ENCODE measurements at regions of chr6 and their contacts with region 1.

Region 1: GRCh38 chr6:121430514-121431460 is 4.7 kb upstream of the GJA1 start:
- DNase-seq: no peak
- H3K4me3 ChIP-seq: no peak overlapping the region
- H3K27ac ChIP-seq: peak overlapping the region in 1 of 2 donors; percentile 13
- H3K4me1 ChIP-seq: no peaks in the 10 kb centered on the region
- H3K27me3 ChIP-seq: no peaks in the 10 kb centered on the region
- CTCF ChIP-seq: peak; percentile 16 to 87 (median 69)
- POLR2A ChIP-seq: no peak

Region 2: DNA sequence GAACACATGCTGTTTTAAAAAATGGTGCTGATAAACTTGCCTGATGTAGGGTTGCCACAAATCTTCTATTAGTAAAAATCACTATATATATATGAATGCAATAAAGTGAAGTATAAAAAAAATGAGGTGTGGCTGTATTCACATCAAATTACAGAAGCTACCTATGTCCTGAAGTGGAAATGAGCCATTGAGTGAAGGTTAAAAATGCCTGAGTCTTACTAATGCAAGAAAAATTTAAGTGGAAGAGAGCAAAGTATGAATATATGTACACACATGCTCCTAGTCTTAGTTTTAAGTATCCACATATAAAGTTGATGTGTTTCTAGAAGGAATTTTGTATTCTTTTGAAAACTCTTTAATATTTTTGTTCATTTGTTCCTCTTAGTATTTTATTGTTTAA is 1272.9 kb before region 1 on chr6:
- intact Hi-C with region 1: no loop called
- DNase-seq: no peak
- H3K4me3 ChIP-seq: no peak overlapping the region
- H3K27ac ChIP-seq: no peak overlapping the region
- H3K4me1 ChIP-seq: no peaks in the 10 kb centered on the region
- H3K27me3 ChIP-seq: no peaks in the 10 kb centered on the region
- CTCF ChIP-seq: no peak
- POLR2A ChIP-seq: no peak

Region 3: GRCh38 chr6:121247386-121247785 is 183.4 kb before region 1 on chr6:
- intact Hi-C with region 1: no loop called
- DNase-seq: no peak
- H3K4me3 ChIP-seq: no peak overlapping the region
- H3K27ac ChIP-seq: no peak overlapping the region
- H3K4me1 ChIP-seq: no peaks in the 10 kb centered on the region
- H3K27me3 ChIP-seq: no peaks in the 10 kb centered on the region
- CTCF ChIP-seq: no peak
- POLR2A ChIP-seq: no peak

Region 4: DNA sequence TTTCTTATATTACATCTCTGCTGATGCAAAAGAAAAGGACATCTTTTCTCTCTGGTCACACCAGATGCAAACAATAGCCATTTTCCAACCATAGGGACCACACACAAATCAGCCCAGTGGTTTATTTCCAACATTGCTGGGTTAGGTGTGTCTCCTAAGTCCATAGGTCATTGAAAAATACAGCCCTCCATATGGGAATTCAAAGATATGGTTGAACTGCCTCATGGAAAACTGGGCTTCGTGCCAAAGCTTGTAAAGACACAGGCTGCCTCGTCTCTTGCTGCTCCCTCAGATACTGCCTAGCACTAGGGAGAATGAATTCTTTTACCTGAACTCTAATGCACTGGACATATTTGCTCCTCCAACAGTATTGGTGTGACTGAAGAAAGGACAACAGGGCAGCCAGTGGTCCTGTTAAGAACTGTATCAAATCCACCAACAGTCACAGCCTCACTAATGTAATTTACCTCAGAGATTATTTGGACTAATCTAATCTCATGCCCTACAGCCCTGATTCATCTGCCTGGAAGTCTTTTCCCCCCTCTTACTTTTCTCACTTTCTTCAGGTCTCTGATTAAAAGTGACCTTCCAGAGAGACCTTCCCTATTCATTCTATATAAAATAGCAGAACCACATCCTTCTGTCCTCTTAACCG is 48.2 kb before region 1 on chr6:
- intact Hi-C with region 1: no loop called
- DNase-seq: no peak
- H3K4me3 ChIP-seq: no peak overlapping the region
- H3K27ac ChIP-seq: no peak overlapping the region
- H3K4me1 ChIP-seq: no peaks in the 10 kb centered on the region
- H3K27me3 ChIP-seq: no peaks in the 10 kb centered on the region
- CTCF ChIP-seq: no peak
- POLR2A ChIP-seq: no peak

Region 5: DNA sequence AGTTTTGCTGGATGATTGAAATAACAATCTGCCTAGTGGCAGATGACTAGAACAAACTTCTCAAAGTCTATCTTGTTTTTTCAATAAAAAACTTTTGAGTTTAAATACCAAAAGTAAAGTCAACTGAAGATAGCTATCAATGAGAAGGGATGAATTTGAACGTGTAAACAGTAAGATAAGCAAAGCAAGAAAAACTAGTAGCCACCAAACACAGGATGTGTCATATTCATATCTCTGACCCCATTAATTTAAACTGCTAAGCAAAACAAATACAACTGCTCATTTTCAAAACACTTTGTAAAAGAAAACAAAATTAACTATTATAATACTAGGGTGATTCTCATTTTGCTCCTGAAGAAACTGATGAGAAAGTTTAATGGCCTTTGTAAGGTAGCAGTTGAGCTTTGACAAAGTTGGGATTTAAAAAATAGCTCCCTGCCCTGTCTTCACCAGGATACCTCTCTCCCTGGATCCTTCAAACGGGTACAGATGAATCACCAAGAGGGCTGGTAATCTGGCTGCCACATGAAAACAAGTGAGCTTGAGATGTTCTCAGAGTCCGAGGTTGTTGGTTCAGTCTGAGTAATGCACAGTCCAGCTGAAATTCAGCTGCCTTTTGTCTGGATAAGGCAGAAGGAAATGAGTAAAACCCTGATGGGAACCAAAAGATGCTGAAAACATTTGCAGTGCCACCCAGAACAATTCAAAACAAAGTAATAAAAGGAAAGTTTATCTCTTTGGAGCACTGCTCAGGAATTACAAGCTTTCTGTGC is 91.3 kb after region 1 on chr6:
- intact Hi-C with region 1: loop called (anchors 10 kb)
- DNase-seq: peak; percentile 28
- H3K4me3 ChIP-seq: peak overlapping the region in 1 of 2 donors; percentile 5
- H3K27ac ChIP-seq: peak overlapping the region; percentile 26 to 49
- H3K4me1 ChIP-seq: no peaks in the 10 kb centered on the region
- H3K27me3 ChIP-seq: no peaks in the 10 kb centered on the region
- CTCF ChIP-seq: no peak
- POLR2A ChIP-seq: no peak

Region 6: DNA sequence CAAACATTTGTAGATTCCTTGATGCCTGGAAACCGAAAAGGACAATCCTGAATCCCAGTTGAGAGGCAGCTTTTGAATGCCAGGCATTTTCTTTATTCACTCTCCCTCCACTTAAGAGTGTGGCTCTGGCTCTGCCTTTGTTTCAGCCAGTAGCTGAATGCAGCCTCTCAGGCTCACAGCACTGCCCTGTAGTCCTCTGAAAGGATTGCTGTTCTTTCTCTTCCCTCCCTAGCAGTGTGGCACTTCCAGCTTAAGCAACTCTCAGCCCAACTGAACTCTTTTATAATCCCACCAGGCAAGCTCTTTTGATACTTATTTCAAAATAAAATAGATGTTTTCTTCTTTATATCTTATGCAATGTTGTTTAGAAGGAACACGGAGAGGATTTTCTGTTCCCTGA is 420.3 kb after region 1 on chr6:
- intact Hi-C with region 1: loop called (anchors 5 kb)
- DNase-seq: no peak
- H3K4me3 ChIP-seq: no peak overlapping the region
- H3K27ac ChIP-seq: no peak overlapping the region
- H3K4me1 ChIP-seq: no peaks in the 10 kb centered on the region
- H3K27me3 ChIP-seq: no peaks in the 10 kb centered on the region
- CTCF ChIP-seq: no peak
- POLR2A ChIP-seq: no peak

Region 7: DNA sequence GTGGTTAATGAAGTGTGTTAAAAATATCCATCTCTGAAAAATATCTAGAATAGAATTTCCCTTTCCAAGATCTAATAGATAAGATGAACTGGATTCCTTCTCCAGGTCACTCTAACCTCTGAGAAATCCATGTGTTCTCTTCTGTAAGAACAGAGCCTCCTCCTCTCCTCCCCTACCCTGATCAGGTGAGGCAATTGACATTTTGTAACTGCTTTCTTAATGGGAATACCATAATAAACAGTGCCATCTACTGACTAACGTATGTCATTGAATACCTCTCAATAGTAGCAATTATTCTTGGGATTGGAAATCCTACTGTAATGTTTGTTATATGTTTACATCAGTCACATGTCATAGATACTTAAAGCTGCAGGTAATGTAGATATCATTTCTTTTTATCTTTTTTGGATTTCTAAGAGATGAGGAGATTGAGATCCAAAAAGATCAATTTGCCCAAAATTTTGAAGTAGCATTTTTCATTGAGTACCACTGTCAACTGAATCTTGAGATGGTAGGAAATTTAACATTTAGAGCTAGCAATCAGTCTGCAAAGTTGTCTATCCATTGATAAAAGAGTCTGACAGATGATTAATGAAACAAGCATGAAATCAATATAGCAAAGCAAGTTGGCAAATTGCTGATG is 602.9 kb after region 1 on chr6:
- intact Hi-C with region 1: loop called (anchors 5 kb)
- DNase-seq: peak; percentile 14
- H3K4me3 ChIP-seq: no peak overlapping the region
- H3K27ac ChIP-seq: no peak overlapping the region
- H3K4me1 ChIP-seq: no peaks in the 10 kb centered on the region
- H3K27me3 ChIP-seq: no peaks in the 10 kb centered on the region
- CTCF ChIP-seq: peak in 3 of 4 experiments; percentile 70 to 77 (median 76)
- POLR2A ChIP-seq: no peak